ENCODE measurements at regions of chr12 and their contacts with region 1.

Region 1: GRCh38 chr12:47837190-47838171 is 17.8 kb upstream of the HDAC7 start:
- DNase-seq: peak; percentile 78
- H3K4me3 Mint-ChIP-seq: no peak overlapping the region
- H3K27ac Mint-ChIP-seq: peak overlapping the region; percentile 31
- H3K4me1 Mint-ChIP-seq: peaks cover 60% of the 10 kb centered on the region
- H3K27me3 Mint-ChIP-seq: peaks cover 16% of the 10 kb centered on the region

Region 2: DNA sequence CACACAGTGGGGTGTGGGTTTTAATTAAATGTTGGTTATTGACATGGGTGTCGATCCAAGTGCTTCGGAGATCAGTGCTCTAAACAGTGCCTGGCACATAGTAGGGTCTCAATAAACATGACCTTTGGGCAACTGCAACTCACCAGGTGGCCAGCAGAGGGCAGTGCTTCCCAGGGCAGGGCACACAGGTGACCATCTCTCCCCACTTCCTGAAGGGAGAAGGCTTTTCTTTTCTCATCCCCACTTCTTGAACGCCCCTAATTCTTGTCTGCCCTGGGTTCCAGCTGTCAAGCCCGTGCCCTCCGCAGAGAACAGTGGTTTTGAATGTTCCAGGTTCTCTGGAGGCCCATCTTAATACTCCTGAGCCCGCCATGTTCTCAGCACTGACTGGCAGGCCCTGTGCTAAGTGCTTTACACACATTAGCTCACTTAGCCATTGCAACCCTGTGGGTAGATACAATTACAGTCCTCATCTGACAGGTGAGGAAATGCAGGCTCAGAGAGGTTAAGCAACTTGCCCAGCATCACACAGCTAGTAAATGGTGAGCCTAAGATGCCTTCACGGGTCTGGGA is 95.1 kb before region 1 on chr12:
- CTCF ChIA-PET with region 1: interaction called, 544 read pairs
- DNase-seq: peak; percentile 86
- H3K4me3 Mint-ChIP-seq: no peak overlapping the region
- H3K27ac Mint-ChIP-seq: no peak overlapping the region
- H3K4me1 Mint-ChIP-seq: peaks cover 8% of the 10 kb centered on the region
- H3K27me3 Mint-ChIP-seq: peaks cover 64% of the 10 kb centered on the region

Region 3: GRCh38 chr12:47767216-47767724 is 70.2 kb before region 1 on chr12:
- CTCF ChIA-PET with region 1: interaction called, 155 read pairs
- DNase-seq: peak; percentile 86
- H3K4me3 Mint-ChIP-seq: no peak overlapping the region
- H3K27ac Mint-ChIP-seq: no peak overlapping the region
- H3K4me1 Mint-ChIP-seq: peaks cover 16% of the 10 kb centered on the region
- H3K27me3 Mint-ChIP-seq: peaks cover 46% of the 10 kb centered on the region

Region 4: GRCh38 chr12:47779301-47779942 is 58.1 kb before region 1 on chr12:
- CTCF ChIA-PET with region 1: interaction called, 119 read pairs
- DNase-seq: peak; percentile 95
- H3K4me3 Mint-ChIP-seq: no peak overlapping the region
- H3K27ac Mint-ChIP-seq: peak overlapping the region; percentile 77
- H3K4me1 Mint-ChIP-seq: peaks cover 53% of the 10 kb centered on the region
- H3K27me3 Mint-ChIP-seq: no peaks in the 10 kb centered on the region

Region 5: GRCh38 chr12:47797441-47797840 is 40.0 kb before region 1 on chr12:
- CTCF ChIA-PET with region 1: interaction called, 716 read pairs
- DNase-seq: peak; percentile 50
- H3K4me3 Mint-ChIP-seq: no peak overlapping the region
- H3K27ac Mint-ChIP-seq: peak overlapping the region; percentile 90
- H3K4me1 Mint-ChIP-seq: peaks cover 46% of the 10 kb centered on the region
- H3K27me3 Mint-ChIP-seq: no peaks in the 10 kb centered on the region

Region 6: GRCh38 chr12:47850153-47851084 is 12.9 kb after region 1 on chr12:
- CTCF ChIA-PET with region 1: interaction called, 11 read pairs
- DNase-seq: no peak
- H3K4me3 Mint-ChIP-seq: no peak overlapping the region
- H3K27ac Mint-ChIP-seq: no peak overlapping the region
- H3K4me1 Mint-ChIP-seq: no peaks in the 10 kb centered on the region
- H3K27me3 Mint-ChIP-seq: no peaks in the 10 kb centered on the region

Region 7: GRCh38 chr12:47876440-47876960 is 39.0 kb after region 1 on chr12:
- CTCF ChIA-PET with region 1: no interaction called
- DNase-seq: no peak
- H3K4me3 Mint-ChIP-seq: no peak overlapping the region
- H3K27ac Mint-ChIP-seq: no peak overlapping the region
- H3K4me1 Mint-ChIP-seq: peaks cover 14% of the 10 kb centered on the region
- H3K27me3 Mint-ChIP-seq: no peaks in the 10 kb centered on the region

Measured in activated naive CD4-positive, alpha-beta T cell treated with anti-CD3 and anti-CD28 coated beads, Interleukin-2, amount 10 ng/mL, durations not matched to agents 7 days and 5 days (primary cell).